ENCODE measurements at regions of chr18 and their contacts with region 1.

Region 1: GRCh38 chr18:35484034-35484433 is 13.7 kb downstream of the INO80C start:
- DNase-seq: no peak
- ATAC-seq: peak; percentile 82
- H3K4me3 Mint-ChIP-seq: no peak overlapping the region
- H3K27ac Mint-ChIP-seq: no peak overlapping the region
- H3K4me1 Mint-ChIP-seq: peaks cover 42% of the 10 kb centered on the region
- H3K27me3 Mint-ChIP-seq: no peaks in the 10 kb centered on the region
- CTCF ChIP-seq: no peak

Region 2: GRCh38 chr18:35415511-35416073 is 68.4 kb before region 1 on chr18:
- CTCF ChIA-PET with region 1: no interaction called
- POLR2A ChIA-PET with region 1: no interaction called
- intact Hi-C with region 1: loop called (anchors 2 kb)
- DNase-seq: peak; percentile 9
- ATAC-seq: peak; percentile 82
- H3K4me3 Mint-ChIP-seq: peak overlapping the region; percentile 56
- H3K27ac Mint-ChIP-seq: peak overlapping the region; percentile 82
- H3K4me1 Mint-ChIP-seq: peaks cover 31% of the 10 kb centered on the region
- H3K27me3 Mint-ChIP-seq: peaks cover 1% of the 10 kb centered on the region
- CTCF ChIP-seq: no peak

Measured in activated CD8-positive, alpha-beta T cell treated with anti-CD3 and anti-CD28 coated beads for 36 hours (primary cell).